ENCODE measurements at regions of chr12 and their contacts with region 1.

Region 1: DNA sequence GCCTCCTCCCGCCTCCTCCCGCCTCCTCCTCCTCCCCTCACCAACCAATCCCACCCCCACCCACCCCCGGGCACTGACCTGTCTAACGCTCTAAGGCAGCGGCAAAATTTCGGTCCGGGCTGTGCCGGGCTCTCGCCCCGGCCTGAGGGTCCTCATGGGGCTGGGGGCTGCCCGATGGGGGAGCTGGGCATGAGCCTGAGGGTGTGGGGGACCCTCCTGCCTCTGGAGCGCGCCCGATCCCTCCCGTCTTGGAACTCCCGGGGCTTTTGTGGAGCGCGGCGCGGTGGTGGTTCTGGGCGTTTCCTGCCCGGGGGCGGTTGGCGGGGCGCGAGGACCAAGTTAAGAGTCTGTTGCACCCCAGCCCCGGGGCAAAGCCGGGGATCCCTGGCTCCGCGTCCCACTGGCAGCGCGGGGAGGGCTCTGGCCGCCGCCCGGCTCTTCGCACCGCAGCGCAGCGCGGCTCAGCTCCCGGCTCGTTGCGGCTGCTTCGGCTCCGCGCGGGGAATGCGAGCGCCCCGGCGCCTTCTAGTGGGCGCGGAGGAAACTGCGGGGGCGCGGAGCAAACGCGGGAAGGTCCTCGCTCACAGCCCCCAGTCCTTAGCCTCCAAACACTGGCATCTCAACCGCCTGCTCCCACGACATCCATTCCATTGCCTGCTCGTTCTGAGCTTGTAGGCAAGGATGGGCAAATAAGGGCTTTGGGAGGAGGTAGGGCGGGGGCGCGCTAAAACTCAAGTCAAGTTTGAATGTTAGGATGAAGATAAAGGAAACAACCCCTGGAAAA is at the start of gene B4GALNT1:
- DNase-seq: no peak
- H3K4me3 ChIP-seq: peak within 1 kb of the TSS; percentile 59
- H3K27ac ChIP-seq: no peak within 1 kb of the TSS
- H3K27me3 ChIP-seq: peaks cover 32% of the 10 kb centered on the region
- CTCF ChIP-seq: peak; percentile 91
- polyA plus RNA-seq, gene B4GALNT1: 1.8 and 2.5 TPM in 2 replicates

Region 2: GRCh38 chr12:57576613-57577160 is 56.2 kb before region 1 on chr12:
- CTCF ChIA-PET with region 1: interaction called, 16 read pairs
- POLR2A ChIA-PET with region 1: no interaction called
- DNase-seq: no peak
- H3K4me3 ChIP-seq: no peak overlapping the region
- H3K27ac ChIP-seq: no peak overlapping the region
- H3K27me3 ChIP-seq: peaks cover 21% of the 10 kb centered on the region
- CTCF ChIP-seq: no peak

Measured in AG04450 (cell line).